PC-3 (cell line): ENCODE measurements at regions of chr13 and their contacts with region 1.

Region 1: GRCh38 chr13:43786773-43787517 is at the start of gene ENOX1:
- DNase-seq: peak; percentile 47
- ATAC-seq: peak; percentile 59
- H3K4me3 ChIP-seq: peak within 1 kb of the TSS; percentile 79
- H3K27ac ChIP-seq: no peak within 1 kb of the TSS
- H3K4me1 ChIP-seq: peaks cover 7% of the 10 kb centered on the region; the same call in 1 of the 2 replicates
- H3K27me3 ChIP-seq: no peaks in the 10 kb centered on the region
- CTCF ChIP-seq: no peak
- total RNA-seq, gene ENOX1: 0.81 and 0.95 TPM in 2 replicates

Region 2: DNA sequence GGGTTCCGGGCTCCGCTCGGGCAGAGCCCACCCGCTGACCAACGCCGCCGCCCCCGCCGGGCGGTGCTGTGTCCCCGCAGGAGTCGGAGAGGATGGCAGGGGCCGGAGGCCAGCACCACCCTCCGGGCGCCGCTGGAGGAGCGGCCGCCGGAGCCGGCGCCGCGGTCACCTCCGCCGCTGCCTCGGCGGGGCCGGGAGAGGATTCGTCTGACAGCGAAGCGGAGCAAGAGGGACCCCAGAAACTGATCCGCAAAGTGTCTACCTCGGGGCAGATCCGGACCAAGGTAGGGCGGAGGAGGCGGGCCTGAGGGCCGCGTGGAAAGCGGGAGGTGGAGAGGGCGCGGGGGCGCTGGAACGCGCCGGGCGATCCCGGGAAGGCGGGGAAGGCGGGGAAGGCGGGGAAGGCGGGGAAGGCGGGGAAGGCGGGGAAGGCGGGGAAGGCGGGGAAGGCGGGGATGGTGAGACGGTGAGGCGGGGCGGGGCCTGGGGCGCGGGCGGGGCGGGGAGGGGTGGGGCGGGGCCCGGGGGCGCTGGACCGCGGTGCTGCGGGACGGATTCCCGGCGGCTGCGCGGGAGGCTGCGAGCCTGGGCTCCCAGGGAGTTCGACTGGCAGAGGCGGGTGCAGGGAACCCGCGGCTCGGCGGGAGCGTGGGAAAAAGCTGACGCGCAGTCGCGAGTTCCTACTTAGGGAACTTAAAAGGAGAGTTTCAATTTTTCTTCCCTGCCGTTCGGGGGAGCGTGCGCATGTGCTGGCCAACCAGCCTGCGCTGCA is 1738.1 kb before region 1 on chr13:
- CTCF ChIA-PET with region 1: interaction called, 15 read pairs
- POLR2A ChIA-PET with region 1: no interaction called
- intact Hi-C with region 1: no loop called
- DNase-seq: peak; percentile 61
- ATAC-seq: peak; percentile 50
- H3K4me3 ChIP-seq: peak overlapping the region; percentile 83
- H3K27ac ChIP-seq: peak overlapping the region; percentile 85
- H3K4me1 ChIP-seq: peaks cover 12% of the 10 kb centered on the region
- H3K27me3 ChIP-seq: no peaks in the 10 kb centered on the region
- CTCF ChIP-seq: peak; percentile 29; the same call in 1 of the 2 replicates

Region 3: DNA sequence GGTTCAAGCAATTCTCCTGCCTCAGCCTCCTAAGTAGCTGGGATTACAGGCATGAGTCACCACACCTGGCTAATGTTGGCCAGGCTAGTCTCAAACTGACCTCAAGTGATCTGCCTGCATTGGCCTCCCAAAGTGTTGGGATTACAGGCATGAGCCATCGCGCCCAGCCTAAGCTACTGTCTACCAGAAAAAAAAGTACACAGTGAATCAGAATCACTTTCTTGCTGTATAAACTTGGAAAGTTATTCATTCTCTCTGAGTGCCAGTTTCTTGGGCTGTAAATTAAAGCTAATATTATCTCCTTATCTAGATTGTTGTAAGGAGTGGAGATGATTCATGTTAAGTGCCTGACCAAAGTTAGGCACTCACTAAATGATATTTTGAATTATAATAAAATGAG is 242.9 kb before region 1 on chr13:
- CTCF ChIA-PET with region 1: no interaction called
- POLR2A ChIA-PET with region 1: no interaction called
- intact Hi-C with region 1: loop called (anchors 5 kb)
- DNase-seq: peak; percentile 68
- ATAC-seq: peak; percentile 91
- H3K4me3 ChIP-seq: no peak overlapping the region
- H3K27ac ChIP-seq: peak overlapping the region; percentile 92
- H3K4me1 ChIP-seq: peaks cover 23% of the 10 kb centered on the region
- H3K27me3 ChIP-seq: no peaks in the 10 kb centered on the region
- CTCF ChIP-seq: no peak

Region 4: GRCh38 chr13:43686557-43686956 is 100.4 kb before region 1 on chr13:
- CTCF ChIA-PET with region 1: no interaction called
- POLR2A ChIA-PET with region 1: no interaction called
- intact Hi-C with region 1: loop called (anchors 10 kb)
- DNase-seq: peak; percentile 59
- ATAC-seq: peak; percentile 93
- H3K4me3 ChIP-seq: peak overlapping the region; percentile 45; the same call in 1 of the 2 replicates
- H3K27ac ChIP-seq: peak overlapping the region; percentile 50
- H3K4me1 ChIP-seq: peaks cover 14% of the 10 kb centered on the region
- H3K27me3 ChIP-seq: no peaks in the 10 kb centered on the region
- CTCF ChIP-seq: no peak